Dendritic cell treated with granulocyte-macrophage colony-stimulating factor and Interleukin-4, amounts not matched to agents 40 ng/mL and 50 ng/mL, for 4 days (primary cell): ENCODE measurements at regions of chr7 and their contacts with region 1.

Region 1: GRCh38 chr7:20152511-20152910 is 64.7 kb downstream of the MACC1 start:
- H3K4me3 Mint-ChIP-seq: no peak overlapping the region
- H3K27ac Mint-ChIP-seq: no peak overlapping the region
- H3K4me1 Mint-ChIP-seq: peaks cover 24% of the 10 kb centered on the region
- H3K27me3 Mint-ChIP-seq: no peaks in the 10 kb centered on the region

Region 2: GRCh38 chr7:19982841-19983835 is 169.4 kb before region 1 on chr7:
- intact Hi-C with region 1: loop called (anchors 5 kb)
- H3K4me3 Mint-ChIP-seq: no peak overlapping the region
- H3K27ac Mint-ChIP-seq: no peak overlapping the region
- H3K4me1 Mint-ChIP-seq: no peaks in the 10 kb centered on the region
- H3K27me3 Mint-ChIP-seq: no peaks in the 10 kb centered on the region